PC-9 (cell line): ENCODE measurements at regions of chrX and their contacts with region 1.

Region 1: GRCh38 chrX:45621376-45622041 is 420.8 kb upstream of the DIPK2B start:
- DNase-seq: no peak
- H3K4me3 ChIP-seq: no peak overlapping the region
- H3K27ac ChIP-seq: no peak overlapping the region
- H3K4me1 ChIP-seq: no peaks in the 10 kb centered on the region
- H3K27me3 ChIP-seq: no peaks in the 10 kb centered on the region
- CTCF ChIP-seq: no peak

Region 2: GRCh38 chrX:45322382-45322781 is 299.1 kb before region 1 on chrX:
- CTCF ChIA-PET with region 1: interaction called, 12 read pairs
- POLR2A ChIA-PET with region 1: no interaction called
- intact Hi-C with region 1: no loop called
- DNase-seq: peak; percentile 14 to 52
- H3K4me3 ChIP-seq: no peak overlapping the region
- H3K27ac ChIP-seq: no peak overlapping the region
- H3K4me1 ChIP-seq: 0 out of 2 replicates have a peak, but pooled peaks cover 3% of the 10 kb centered on the region
- H3K27me3 ChIP-seq: no peaks in the 10 kb centered on the region
- CTCF ChIP-seq: peak; percentile 52; the same call in 1 of the 2 replicates

Region 3: GRCh38 chrX:45445745-45446412 is 175.6 kb before region 1 on chrX:
- CTCF ChIA-PET with region 1: no interaction called
- POLR2A ChIA-PET with region 1: no interaction called
- intact Hi-C with region 1: no loop called
- DNase-seq: peak in 1 of 2 experiments; percentile 81
- H3K4me3 ChIP-seq: no peak overlapping the region
- H3K27ac ChIP-seq: peak overlapping the region; percentile 60
- H3K4me1 ChIP-seq: no peaks in the 10 kb centered on the region; the same call in 1 of the 2 replicates
- H3K27me3 ChIP-seq: no peaks in the 10 kb centered on the region
- CTCF ChIP-seq: no peak